Activated B cell treated with CpG ODN at 0.5 μM for 24 hours (primary cell): ENCODE measurements at regions of chr1 and their contacts with region 1.

Region 1: DNA sequence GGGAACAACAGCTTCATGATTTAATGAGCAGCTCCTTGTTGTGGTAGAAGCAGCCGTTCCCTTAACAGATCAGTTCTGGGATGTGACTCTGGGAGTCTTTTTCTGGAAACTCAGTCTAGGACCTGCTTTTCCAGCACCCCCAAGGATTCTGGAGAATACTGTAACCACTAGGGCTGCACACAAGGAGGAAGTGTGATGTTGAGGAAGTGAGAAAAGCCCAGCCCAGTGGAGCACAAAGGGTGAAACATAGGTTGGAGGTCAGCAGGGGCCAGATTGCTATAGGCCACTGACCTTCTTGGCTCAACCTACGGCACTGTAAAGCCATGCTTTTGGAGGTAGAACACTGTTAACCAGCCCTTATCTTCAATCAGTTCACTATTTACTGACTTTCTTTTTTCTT is 10.1 kb upstream of the PLA2G5 start:
- DNase-seq: no peak
- ATAC-seq: peak; percentile 92
- H3K4me3 Mint-ChIP-seq: peak overlapping the region; percentile 56
- H3K27ac Mint-ChIP-seq: no peak overlapping the region
- H3K4me1 Mint-ChIP-seq: peaks cover 44% of the 10 kb centered on the region
- H3K27me3 Mint-ChIP-seq: no peaks in the 10 kb centered on the region
- CTCF ChIP-seq: no peak

Region 2: DNA sequence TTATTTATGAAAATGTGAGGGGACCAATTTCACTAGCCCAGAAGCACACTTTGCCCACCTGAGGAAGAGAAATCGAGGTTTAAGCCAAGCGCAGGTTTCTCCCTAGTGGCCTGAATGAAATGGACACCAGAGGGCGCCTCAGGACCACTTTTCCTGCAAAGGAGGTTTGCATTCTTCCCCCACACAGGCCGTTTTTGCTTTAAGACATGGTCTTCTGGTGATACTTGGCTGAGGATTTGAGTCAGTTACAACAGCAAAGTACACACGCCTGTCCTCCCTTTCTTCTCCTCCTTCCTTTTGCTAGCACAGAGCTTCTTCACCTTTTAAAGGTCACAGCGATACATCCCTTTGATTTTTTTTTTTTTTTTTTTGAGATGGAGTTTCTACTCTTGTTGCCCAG is 141.8 kb before region 1 on chr1:
- CTCF ChIA-PET with region 1: no interaction called
- POLR2A ChIA-PET with region 1: no interaction called
- intact Hi-C with region 1: no loop called
- DNase-seq: peak; percentile 57
- ATAC-seq: peak; percentile 74
- H3K4me3 Mint-ChIP-seq: no peak overlapping the region
- H3K27ac Mint-ChIP-seq: no peak overlapping the region
- H3K4me1 Mint-ChIP-seq: peaks cover 2% of the 10 kb centered on the region
- H3K27me3 Mint-ChIP-seq: peaks cover 5% of the 10 kb centered on the region
- CTCF ChIP-seq: peak; percentile 86

Region 3: GRCh38 chr1:20078171-20078651 is 18.4 kb after region 1 on chr1:
- CTCF ChIA-PET with region 1: interaction called, 3 read pairs
- POLR2A ChIA-PET with region 1: no interaction called
- intact Hi-C with region 1: loop called (anchors 2 kb)
- DNase-seq: no peak
- ATAC-seq: peak; percentile 76
- H3K4me3 Mint-ChIP-seq: peak overlapping the region; percentile 69
- H3K27ac Mint-ChIP-seq: peak overlapping the region; percentile 89
- H3K4me1 Mint-ChIP-seq: peaks cover 90% of the 10 kb centered on the region
- H3K27me3 Mint-ChIP-seq: no peaks in the 10 kb centered on the region
- CTCF ChIP-seq: no peak